G401 (cell line): ENCODE measurements at regions of chr2 and their contacts with region 1.

Region 1: GRCh38 chr2:234374736-234375135 is 122.1 kb downstream of the ARL4C start:
- DNase-seq: no peak

Region 2: DNA sequence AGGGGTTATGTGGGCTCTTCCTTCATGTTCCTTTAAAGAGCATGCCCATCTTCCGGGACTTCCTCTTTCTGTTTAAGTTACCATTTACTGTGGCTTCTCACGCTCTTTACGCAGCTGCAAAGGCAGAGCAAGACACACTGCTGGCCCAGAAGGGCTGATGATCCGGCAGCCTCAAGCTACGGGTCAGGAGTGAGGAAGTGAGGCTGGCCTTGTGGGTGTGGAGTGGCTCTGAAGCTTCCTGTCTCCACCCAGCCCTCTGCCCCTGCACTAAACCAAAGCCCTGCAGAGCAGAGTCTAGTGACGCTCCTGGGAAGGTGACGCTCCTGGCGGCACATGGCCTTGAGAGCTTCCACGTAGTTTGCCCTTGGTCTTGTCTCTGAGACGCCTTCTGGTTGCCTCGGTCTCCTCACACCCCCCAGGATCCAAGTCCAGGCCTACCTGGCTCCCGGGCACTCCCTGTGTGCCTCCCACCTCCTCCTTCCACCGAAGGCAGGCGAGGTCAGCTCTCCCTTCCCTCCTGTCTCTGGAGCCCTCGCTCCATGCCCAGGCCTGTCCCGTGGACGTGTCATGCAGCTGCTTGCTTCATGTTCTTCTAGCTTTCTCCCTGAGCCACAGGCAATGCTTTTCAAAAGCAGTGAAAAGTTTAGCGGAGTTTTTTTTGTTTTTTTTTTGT is 71.8 kb after region 1 on chr2:
- in situ Hi-C with region 1: loop called (anchors 5 kb)
- DNase-seq: no peak

Region 3: GRCh38 chr2:235021752-235022151 is 647.0 kb after region 1 on chr2:
- in situ Hi-C with region 1: no loop called
- DNase-seq: no peak